Activated CD8-positive, alpha-beta T cell treated with anti-CD3 and anti-CD28 coated beads, Interleukin-2, amount 10 ng/mL, durations not matched to agents 7 days and 5 days (primary cell): ENCODE measurements at regions of chr3 and their contacts with region 1.

Region 1: DNA sequence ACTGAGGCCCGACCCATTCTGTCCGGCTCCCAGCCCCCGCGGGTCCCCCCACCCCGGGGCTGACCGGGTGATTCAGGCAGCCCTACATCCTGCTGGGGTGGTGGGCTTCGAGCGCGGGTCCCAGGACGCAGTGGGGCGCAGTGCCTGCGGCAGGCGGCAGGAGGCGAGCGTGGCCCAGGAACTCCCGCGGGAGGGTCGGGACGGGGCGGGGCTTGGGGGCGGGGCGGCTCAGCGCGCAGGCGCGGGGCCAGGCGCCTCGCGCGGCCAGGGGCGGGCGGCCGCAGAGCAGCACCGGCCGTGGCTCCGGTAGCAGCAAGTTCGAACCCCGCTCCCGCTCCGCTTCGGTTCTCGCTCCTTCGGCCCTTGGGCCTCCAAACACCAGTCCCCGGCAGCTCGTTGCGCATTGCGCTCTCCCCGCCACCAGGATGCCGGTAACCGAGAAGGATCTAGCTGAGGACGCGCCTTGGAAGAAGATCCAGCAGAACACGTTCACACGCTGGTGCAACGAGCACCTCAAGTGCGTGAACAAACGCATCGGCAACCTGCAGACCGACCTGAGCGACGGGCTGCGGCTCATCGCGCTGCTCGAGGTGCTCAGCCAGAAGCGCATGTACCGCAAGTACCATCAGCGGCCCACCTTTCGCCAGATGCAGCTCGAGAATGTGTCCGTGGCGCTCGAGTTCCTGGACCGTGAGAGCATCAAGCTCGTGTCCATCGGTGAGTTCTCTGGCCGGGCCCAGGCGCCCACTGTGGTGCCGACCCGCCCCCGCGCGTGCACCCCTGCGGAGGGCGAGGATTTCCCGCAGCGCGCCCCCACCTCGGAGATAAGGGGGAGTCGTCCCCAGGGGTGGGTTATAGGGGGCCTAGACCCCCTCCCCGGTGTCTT is at the start of gene FLNB:
- DNase-seq: peak; percentile 81
- ATAC-seq: peak; percentile 86
- H3K4me3 Mint-ChIP-seq: peak within 1 kb of the TSS; percentile 89
- H3K27ac Mint-ChIP-seq: peak within 1 kb of the TSS; percentile 87
- H3K4me1 Mint-ChIP-seq: peaks cover 36% of the 10 kb centered on the region
- H3K27me3 Mint-ChIP-seq: no peaks in the 10 kb centered on the region
- total RNA-seq, gene FLNB: 14.1 to 15.9 TPM

Region 2: DNA sequence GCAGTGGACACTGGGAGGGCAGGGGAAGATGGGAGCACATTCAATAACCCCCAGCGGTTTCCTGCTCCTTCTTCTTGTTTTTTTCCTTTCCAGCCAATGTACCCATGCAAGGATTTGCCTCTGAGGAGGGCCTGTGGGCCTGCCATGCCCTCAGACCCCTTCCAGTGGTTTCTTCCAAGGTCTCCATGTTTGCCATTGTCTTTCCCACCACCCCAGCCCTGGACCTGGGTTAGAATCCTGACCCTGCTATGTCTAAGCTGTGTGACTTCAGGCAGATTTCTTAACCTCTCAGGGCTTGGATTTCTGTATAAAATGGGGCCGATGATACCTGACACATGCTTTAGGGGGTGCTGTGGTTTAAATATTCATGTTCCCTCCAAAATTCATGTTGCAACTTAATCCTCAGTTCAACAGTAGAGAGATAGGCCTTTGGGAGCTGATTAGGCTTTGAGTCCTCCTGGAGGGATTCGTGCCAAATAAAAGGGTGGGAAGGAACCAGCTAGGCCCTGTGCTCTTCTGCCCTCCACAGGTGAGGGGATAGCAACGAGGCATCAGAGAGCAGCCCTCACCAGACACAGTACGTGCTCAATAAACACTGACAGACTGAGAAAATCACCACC is 46.4 kb before region 1 on chr3:
- CTCF ChIA-PET with region 1: interaction called, 10 read pairs
- POLR2A ChIA-PET with region 1: no interaction called
- DNase-seq: no peak
- ATAC-seq: no peak
- H3K4me3 Mint-ChIP-seq: no peak overlapping the region
- H3K27ac Mint-ChIP-seq: no peak overlapping the region
- H3K4me1 Mint-ChIP-seq: peaks cover 14% of the 10 kb centered on the region
- H3K27me3 Mint-ChIP-seq: no peaks in the 10 kb centered on the region

Region 3: DNA sequence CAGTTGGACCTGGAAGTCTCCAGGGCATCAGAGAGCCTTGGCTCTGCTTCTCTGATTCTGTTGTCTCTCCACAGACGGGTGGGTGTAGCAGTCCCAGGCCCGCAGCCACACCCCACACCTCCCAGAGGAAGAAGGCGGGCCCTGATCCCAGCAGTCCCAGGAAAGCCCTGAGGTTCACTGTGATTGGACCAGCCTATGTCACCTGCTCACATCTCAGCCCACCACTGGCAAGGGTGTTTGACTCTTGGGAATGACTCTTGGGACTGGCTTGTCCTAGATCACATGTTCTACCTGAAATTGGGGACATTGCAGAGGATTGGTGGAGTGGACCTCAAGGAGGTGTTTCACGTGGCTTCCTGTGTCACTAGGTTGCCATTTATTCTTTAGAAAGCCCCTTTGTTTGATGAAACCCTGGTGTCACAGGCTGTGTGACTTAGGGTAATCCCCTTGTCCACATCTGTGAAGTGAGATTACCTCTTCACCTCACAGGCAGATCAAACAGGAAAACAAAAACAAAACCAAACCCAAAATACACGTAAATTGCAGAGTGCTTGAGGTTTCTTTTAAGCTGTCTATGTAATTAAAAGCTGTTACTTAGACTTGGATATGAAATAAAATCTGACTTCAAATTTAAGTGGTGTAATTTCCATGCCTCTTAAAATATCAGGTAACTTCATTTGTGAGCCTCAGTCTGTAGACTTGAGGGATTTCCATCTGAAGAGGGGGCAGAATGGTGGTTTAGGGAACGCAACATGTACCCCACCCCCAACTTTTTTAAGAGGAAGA is 26.5 kb after region 1 on chr3:
- CTCF ChIA-PET with region 1: interaction called, 11 read pairs
- POLR2A ChIA-PET with region 1: no interaction called
- DNase-seq: peak; percentile 60
- ATAC-seq: peak; percentile 97
- H3K4me3 Mint-ChIP-seq: no peak overlapping the region
- H3K27ac Mint-ChIP-seq: peak overlapping the region; percentile 28
- H3K4me1 Mint-ChIP-seq: peaks cover 37% of the 10 kb centered on the region
- H3K27me3 Mint-ChIP-seq: peaks cover 4% of the 10 kb centered on the region

Region 4: DNA sequence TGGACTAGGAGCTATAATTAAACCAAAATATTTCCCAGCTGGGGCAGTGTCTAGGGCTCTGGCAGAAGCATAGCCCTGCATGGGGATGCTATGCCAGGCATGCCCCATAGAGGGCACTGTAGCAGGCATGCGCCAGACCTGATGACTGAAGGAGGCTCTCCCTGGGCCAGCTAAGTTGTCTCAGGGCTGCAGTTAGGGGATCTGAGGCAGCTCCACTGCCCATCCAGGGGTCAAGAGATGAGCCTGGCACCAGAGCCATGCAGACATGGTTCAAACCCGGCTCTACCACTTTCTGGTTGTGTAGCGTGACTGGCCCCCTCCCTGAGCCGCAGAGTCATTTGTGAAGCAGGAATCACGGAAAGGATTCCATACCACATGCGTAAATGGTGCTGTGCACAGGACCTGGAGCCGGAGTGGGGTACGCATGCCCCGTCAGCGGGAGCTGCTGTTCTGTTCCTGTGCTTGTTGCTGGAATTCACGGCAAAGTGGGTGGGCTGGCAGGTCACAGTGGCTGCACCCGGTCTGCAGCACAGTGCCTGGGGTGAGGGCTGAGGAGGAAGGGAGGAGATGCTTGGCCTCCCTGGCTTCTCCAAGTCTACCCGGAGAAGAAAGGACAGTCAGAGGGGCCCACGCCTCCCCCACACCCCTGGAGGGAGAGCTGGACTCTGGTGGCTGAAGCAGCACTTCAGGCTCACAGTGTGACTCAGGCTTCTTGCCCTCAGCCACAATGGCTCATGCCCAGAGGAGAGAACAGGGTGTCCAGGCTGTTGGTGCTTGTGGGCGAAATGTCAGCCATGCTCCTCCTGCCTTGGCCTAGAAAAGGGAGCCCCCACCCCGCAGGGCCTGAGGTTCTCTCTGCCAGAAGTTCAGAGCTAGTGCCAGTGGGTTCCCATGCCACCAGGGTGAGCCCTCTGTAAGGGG is 159.3 kb after region 1 on chr3:
- CTCF ChIA-PET with region 1: interaction called, 39 read pairs
- POLR2A ChIA-PET with region 1: interaction called, 5 read pairs
- DNase-seq: peak; percentile 75
- ATAC-seq: peak; percentile 78
- H3K4me3 Mint-ChIP-seq: no peak overlapping the region
- H3K27ac Mint-ChIP-seq: no peak overlapping the region
- H3K4me1 Mint-ChIP-seq: no peaks in the 10 kb centered on the region
- H3K27me3 Mint-ChIP-seq: no peaks in the 10 kb centered on the region

Region 5: DNA sequence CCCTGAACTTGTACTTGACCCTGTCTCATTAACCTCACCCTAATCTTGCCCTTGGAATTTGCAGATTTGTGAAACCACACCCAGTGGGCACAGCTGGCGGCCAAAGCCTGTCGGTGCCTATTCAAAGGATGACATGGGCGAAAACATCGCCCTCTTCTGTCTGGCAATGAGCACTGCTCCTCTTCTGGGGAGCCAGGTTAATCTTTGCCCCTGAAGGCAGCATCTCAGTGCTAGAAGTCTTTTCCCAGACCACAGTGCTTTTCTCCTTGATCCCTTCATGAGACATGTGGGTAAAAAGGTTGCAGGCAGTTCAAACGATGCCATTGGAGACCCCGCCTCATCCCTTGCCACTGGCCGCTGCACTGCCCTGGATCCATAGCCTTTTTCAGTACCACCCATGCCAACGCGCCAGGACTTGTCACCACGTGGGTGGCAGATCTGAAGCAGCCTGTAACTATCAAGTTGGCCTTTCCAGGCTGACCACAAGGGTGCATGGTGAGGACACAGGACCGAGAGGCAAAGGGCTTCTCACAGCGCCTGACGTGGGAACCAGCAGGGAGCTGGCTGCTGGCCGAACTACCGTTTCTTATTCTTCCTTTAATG is 208.9 kb after region 1 on chr3:
- CTCF ChIA-PET with region 1: interaction called, 14 read pairs
- POLR2A ChIA-PET with region 1: no interaction called
- DNase-seq: peak; percentile 72
- ATAC-seq: peak; percentile 89
- H3K4me3 Mint-ChIP-seq: no peak overlapping the region
- H3K27ac Mint-ChIP-seq: no peak overlapping the region
- H3K4me1 Mint-ChIP-seq: peaks cover 15% of the 10 kb centered on the region
- H3K27me3 Mint-ChIP-seq: peaks cover 10% of the 10 kb centered on the region